CD8-positive, alpha-beta T cell (primary cell): ENCODE measurements at regions of chr22 and their contacts with region 1.

Region 1: GRCh38 chr22:20130739-20131596 is 636 bp upstream of the ZDHHC8 start:
- DNase-seq: peak; percentile 46 to 89 (median 81)
- ATAC-seq: peak; percentile 76
- H3K4me3 ChIP-seq: peak overlapping the region; percentile 68 to 73
- H3K4me3 Mint-ChIP-seq: peak overlapping the region; percentile 61
- H3K27ac ChIP-seq: peak overlapping the region; percentile 58 to 64
- H3K27ac Mint-ChIP-seq: peak overlapping the region; percentile 60
- H3K4me1 ChIP-seq: peaks cover 42% of the 10 kb centered on the region
- H3K4me1 Mint-ChIP-seq: peaks cover 29% of the 10 kb centered on the region
- H3K27me3 ChIP-seq: no peaks in the 10 kb centered on the region
- H3K27me3 Mint-ChIP-seq: no peaks in the 10 kb centered on the region
- CTCF ChIP-seq: no peak

Region 2: DNA sequence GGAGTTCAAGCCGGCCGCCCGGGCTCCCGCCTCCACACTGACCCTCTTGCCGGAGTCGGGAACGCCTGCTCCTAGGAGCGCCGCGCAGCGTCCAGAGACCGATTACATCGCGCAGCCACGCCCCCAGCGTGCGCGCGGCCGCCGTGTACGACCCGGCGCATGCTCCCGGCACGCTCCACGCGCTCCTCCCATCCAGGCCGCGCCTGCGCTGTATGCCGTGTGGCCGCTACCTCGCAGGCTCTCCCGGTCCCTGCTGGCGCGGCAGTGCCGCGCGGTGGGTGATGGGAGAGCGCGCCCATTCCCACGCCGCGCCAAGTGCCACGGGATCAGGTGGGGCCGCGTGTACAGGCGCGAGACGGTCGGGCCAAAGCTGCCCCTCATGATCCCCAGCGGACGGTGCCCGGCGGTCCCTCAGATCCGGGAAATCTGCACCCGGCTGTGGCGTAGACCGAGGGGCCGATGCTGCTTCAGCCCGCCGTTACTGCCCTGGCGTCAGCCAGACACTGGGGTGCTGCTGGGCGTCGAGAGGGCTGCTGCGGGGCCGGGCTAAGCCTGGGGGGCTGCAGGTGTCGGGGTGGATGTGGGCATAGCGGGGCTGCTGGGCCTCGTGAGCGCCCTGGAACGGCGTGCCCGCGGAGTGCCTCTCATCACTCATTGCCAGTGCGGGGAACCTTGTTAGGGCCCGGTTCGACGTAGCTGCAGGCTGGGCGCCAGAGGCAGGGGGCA is 276.0 kb before region 1 on chr22 and contains the starts of genes GNB1L and RTL10:
- CTCF ChIA-PET with region 1: no interaction called
- POLR2A ChIA-PET with region 1: no interaction called
- intact Hi-C with region 1: loop called in 1 of 2 experiments (anchors 5 kb)
- DNase-seq: peak; percentile 87 to 99 (median 96)
- ATAC-seq: peak; percentile 91
- H3K4me3 ChIP-seq: peak within 1 kb of the TSS; percentile 97 to 99
- H3K4me3 Mint-ChIP-seq: peak within 1 kb of the TSS; percentile 93
- H3K27ac ChIP-seq: peak within 1 kb of the TSS; percentile 83 to 85
- H3K27ac Mint-ChIP-seq: peak within 1 kb of the TSS; percentile 98
- H3K4me1 ChIP-seq: peaks cover 37% of the 10 kb centered on the region
- H3K4me1 Mint-ChIP-seq: peaks cover 63% of the 10 kb centered on the region
- H3K27me3 ChIP-seq: no peaks in the 10 kb centered on the region
- H3K27me3 Mint-ChIP-seq: no peaks in the 10 kb centered on the region
- CTCF ChIP-seq: no peak
- total RNA-seq, gene GNB1L: 5.8 to 6.9 TPM
- total RNA-seq, gene RTL10: 21.5 to 22.9 TPM

Region 3: DNA sequence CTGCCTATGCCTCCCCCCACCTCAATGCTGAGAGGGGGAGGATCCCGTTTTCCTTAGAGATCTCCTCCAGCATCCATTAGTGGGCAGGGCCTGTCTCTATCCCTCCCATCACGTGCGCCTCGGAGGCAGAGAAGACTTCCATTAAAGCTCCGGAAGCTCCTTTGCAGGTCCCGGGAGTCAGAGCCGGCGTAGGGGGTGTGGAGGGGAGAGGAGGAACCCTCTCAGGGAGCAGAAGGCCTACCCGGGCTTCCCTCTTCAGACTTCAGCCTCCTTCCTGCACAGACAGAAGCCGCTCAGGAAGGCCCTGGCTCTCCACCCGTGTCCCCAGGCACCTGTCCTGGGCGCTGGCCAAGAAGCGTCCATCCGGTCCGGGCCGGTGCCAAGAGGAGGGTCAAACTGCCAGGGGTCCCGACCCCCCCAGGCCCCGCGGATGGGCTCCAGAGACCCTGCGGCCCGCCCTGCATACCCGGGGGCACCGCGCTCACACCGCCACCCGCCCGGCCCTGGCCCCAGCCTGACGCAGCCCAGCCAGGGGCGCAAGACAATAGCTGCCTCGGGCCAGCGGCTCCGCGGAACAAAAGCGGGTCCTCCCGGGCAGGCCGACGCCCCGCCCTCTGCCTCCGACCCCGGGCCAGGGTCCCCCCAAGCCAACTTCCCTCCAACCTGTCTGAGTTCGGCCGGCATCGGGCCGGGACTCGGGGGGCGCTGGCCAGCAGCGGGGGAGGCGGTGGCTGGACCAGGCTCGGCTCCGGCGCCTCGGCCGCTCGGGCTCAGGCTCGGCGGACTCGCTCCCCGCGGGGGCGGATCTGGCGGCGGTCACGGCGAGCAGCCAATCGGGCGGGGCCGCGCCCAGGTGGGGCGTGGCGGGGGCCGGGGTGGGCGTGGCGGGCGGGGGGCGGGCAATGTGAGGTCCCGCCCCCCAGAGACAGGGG is 144.3 kb before region 1 on chr22:
- CTCF ChIA-PET with region 1: no interaction called
- POLR2A ChIA-PET with region 1: no interaction called
- intact Hi-C with region 1: loop called in 1 of 2 experiments (anchors 5 kb)
- DNase-seq: peak; percentile 21 to 79 (median 62)
- ATAC-seq: peak; percentile 93
- H3K4me3 ChIP-seq: peak overlapping the region; percentile 46 to 66
- H3K4me3 Mint-ChIP-seq: peak overlapping the region; percentile 66
- H3K27ac ChIP-seq: no peak overlapping the region
- H3K27ac Mint-ChIP-seq: no peak overlapping the region
- H3K4me1 ChIP-seq: peaks cover 8% of the 10 kb centered on the region
- H3K4me1 Mint-ChIP-seq: peaks cover 3% of the 10 kb centered on the region
- H3K27me3 ChIP-seq: no peaks in the 10 kb centered on the region
- H3K27me3 Mint-ChIP-seq: no peaks in the 10 kb centered on the region
- CTCF ChIP-seq: no peak

Region 4: GRCh38 chr22:20079745-20080444 is 51.1 kb before region 1 on chr22 and contains the start of gene DGCR8:
- CTCF ChIA-PET with region 1: no interaction called
- POLR2A ChIA-PET with region 1: no interaction called
- intact Hi-C with region 1: loop called (anchors 1 kb)
- DNase-seq: peak; percentile 45 to 91 (median 66)
- ATAC-seq: peak; percentile 91
- H3K4me3 ChIP-seq: peak within 1 kb of the TSS; percentile 73 to 99
- H3K4me3 Mint-ChIP-seq: peak within 1 kb of the TSS; percentile 97
- H3K27ac ChIP-seq: peak within 1 kb of the TSS; percentile 62 to 64
- H3K27ac Mint-ChIP-seq: peak within 1 kb of the TSS; percentile 96
- H3K4me1 ChIP-seq: peaks cover 18% of the 10 kb centered on the region
- H3K4me1 Mint-ChIP-seq: peaks cover 43% of the 10 kb centered on the region
- H3K27me3 ChIP-seq: no peaks in the 10 kb centered on the region
- H3K27me3 Mint-ChIP-seq: no peaks in the 10 kb centered on the region
- CTCF ChIP-seq: no peak
- total RNA-seq, gene DGCR8: 16.9 to 22.1 TPM

Region 5: GRCh38 chr22:20205964-20206708 is 75.2 kb after region 1 on chr22:
- CTCF ChIA-PET with region 1: no interaction called
- POLR2A ChIA-PET with region 1: no interaction called
- intact Hi-C with region 1: loop called in 1 of 2 experiments (anchors 2 kb)
- DNase-seq: peak; percentile 21 to 85 (median 73)
- ATAC-seq: peak; percentile 97
- H3K4me3 ChIP-seq: peak overlapping the region; percentile 70 to 86
- H3K4me3 Mint-ChIP-seq: peak overlapping the region; percentile 94
- H3K27ac ChIP-seq: peak overlapping the region; percentile 79 to 83
- H3K27ac Mint-ChIP-seq: peak overlapping the region; percentile 94
- H3K4me1 ChIP-seq: peaks cover 30% of the 10 kb centered on the region
- H3K4me1 Mint-ChIP-seq: peaks cover 29% of the 10 kb centered on the region
- H3K27me3 ChIP-seq: no peaks in the 10 kb centered on the region
- H3K27me3 Mint-ChIP-seq: no peaks in the 10 kb centered on the region
- CTCF ChIP-seq: no peak